ENCODE measurements at regions of chr3 and their contacts with region 1.

Region 1: DNA sequence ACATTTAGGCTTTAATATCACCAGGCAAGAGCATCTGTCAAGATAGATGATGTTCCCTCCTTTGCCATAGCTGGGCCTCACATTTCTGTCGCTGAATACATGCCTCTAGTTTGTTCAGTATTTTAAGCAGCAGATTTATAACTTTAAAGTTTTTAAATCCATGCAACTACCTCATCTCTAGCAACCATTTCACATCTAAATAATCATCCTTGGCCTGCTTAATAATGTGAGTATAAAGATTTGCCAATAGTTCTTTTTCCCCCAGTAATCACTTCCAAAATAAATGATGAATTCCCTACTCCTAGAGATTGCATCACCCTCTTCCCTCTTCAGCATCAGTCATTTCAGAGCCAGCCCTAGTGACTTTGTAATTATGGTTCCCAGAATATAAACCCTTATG is 36.2 kb upstream of the FILIP1L start:
- DNase-seq: no peak

Region 2: GRCh38 chr3:100089812-100090668 is 60.4 kb before region 1 on chr3:
- intact Hi-C with region 1: loop called in 1 of 2 experiments (anchors 5 kb)
- DNase-seq: no peak

Region 3: DNA sequence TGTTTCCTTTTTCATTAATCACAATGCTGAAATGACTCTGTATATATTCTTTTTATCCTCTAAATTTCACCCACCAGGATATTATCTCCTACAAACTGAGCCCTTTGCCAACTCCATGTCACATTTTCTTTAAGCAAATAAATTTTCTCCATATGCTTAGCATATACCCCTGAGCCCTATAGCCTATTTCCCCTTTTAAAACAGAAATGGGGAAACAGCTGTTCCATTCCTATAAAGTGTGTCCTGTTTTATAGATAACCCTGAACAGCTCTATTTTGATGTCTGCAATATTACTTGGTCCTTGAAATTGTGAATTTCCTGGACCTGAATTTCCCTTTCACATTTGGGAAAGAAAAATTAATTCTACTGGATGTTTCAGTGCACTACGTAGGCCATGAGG is 20.5 kb before region 1 on chr3:
- intact Hi-C with region 1: loop called in 1 of 2 experiments (anchors 2 kb)
- DNase-seq: no peak

Measured in posterior vena cava (tissue), 2 donors.